IMR-90 (cell line): ENCODE measurements at regions of chr13 and their contacts with region 1.

Region 1: DNA sequence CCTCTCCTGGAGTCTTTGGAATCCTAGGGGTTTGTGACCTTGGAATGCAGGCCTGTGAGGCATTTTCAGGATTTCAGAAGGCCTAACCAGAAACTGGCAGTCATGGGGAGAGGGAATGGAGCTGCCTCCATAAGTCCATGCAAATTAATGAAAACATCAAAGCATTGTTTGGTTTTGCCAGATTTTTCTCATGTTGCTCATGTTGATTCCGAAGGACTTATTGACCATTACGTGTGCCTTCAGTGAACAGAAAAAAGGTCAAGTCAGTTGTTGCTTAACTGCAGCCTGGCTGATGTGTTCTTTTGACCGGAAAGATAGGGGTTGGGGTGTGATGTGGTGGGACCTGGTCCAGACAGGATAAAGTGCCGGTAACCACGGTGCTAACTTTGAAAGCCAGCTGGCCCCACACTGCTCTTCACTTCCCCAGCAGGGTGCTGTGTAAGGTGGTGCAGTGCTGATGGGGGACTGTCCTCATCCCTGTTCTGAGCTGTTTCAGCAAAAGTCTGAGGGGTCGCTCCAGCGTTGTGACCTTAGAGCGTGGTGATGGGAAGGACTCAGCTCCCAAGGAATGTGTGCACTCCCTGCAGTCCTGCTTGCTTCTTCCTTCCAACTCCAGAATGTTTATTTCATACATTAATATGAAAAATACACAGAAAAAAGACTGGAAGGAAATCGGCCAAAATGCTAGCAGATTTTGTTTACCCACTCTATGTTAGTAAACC is 3.5 kb downstream of the RNF113B start:
- DNase-seq: peak; percentile 99
- ATAC-seq: peak; percentile 76
- H3K4me3 ChIP-seq: no peak overlapping the region
- H3K27ac ChIP-seq: peak overlapping the region; percentile 87
- H3K4me1 ChIP-seq: peaks cover 37% of the 10 kb centered on the region
- H3K27me3 ChIP-seq: no peaks in the 10 kb centered on the region
- CTCF ChIP-seq: no peak
- POLR2A ChIP-seq: 0 out of 2 replicates have a peak, but pooled peaks have one; percentile 28
- RAD21 ChIP-seq: 0 out of 2 replicates have a peak, but pooled peaks have one; percentile 10

Region 2: DNA sequence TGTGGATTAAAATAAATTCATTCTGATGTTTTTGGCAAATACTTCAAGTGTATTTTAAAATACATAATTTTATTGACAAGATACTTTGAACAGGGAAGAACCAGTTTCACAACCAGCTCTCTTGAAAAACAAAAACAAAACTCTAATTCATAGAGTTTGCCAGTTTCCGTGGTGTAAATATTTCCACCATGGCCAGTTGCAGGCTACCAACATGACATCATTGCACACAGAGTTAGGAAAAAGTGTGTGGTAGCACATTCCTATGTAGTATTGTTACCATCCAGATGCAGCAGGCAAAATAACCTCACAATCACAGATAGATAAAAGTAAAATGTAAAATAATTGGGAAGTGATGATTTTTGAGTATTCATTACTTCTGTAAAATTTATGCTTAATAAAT is 11.2 kb after region 1 on chr13:
- CTCF ChIA-PET with region 1: no interaction called
- POLR2A ChIA-PET with region 1: no interaction called
- dilution Hi-C with region 1: no loop called
- in situ Hi-C with region 1: no loop called
- intact Hi-C with region 1: loop called (anchors 1 kb)
- DNase-seq: peak; percentile 68
- ATAC-seq: no peak
- H3K4me3 ChIP-seq: no peak overlapping the region
- H3K27ac ChIP-seq: no peak overlapping the region
- H3K4me1 ChIP-seq: peaks cover 19% of the 10 kb centered on the region
- H3K27me3 ChIP-seq: no peaks in the 10 kb centered on the region
- CTCF ChIP-seq: no peak
- POLR2A ChIP-seq: no peak
- RAD21 ChIP-seq: no peak

Region 3: DNA sequence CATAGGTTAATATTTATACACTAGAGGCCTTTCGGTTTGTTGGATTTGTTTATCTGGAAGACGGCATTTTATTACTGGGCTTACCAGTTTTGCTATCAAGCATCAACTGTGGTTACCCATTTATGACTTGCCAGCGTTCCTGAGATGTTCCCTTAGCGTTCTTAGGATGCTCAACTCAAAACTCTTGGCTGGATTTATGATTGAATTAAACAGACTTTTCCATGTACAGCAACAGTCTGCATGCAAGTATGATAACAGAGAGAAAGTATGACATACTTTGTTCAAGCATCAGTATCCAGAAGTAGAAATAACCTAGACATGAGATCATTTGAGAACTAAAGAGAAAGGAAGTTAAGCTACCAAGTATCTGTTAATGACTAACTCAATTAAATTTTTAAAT is 33.4 kb after region 1 on chr13:
- CTCF ChIA-PET with region 1: no interaction called
- POLR2A ChIA-PET with region 1: no interaction called
- dilution Hi-C with region 1: no loop called
- in situ Hi-C with region 1: no loop called
- intact Hi-C with region 1: loop called (anchors 2 kb)
- DNase-seq: peak; percentile 99
- ATAC-seq: peak; percentile 80
- H3K4me3 ChIP-seq: no peak overlapping the region
- H3K27ac ChIP-seq: no peak overlapping the region
- H3K4me1 ChIP-seq: peaks cover 23% of the 10 kb centered on the region
- H3K27me3 ChIP-seq: no peaks in the 10 kb centered on the region
- CTCF ChIP-seq: no peak
- POLR2A ChIP-seq: no peak
- RAD21 ChIP-seq: peak; percentile 25; the same call in 1 of the 2 replicates

Region 4: DNA sequence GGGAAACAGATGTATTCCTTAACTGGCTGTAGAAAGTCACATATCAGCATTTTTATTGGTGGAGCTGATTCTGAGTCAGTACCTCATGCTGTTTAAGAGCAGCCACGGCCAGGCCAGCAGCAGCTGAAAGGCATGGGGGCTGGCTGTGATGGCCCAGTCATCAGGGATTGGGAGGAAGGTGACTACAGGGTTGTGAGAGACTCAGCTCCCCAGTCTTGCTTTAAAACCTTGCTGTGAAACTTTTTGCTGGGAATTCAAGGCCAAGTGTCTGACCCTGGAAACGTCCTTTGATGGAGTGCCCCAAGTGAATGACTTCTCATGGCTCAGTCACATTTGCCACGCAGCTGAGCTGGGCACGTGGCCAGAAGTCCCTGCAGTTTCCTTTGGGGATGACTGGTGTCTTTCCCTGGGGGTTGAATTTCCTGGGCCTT is 42.6 kb after region 1 on chr13:
- CTCF ChIA-PET with region 1: interaction called, 5 read pairs
- POLR2A ChIA-PET with region 1: no interaction called
- dilution Hi-C with region 1: no loop called
- in situ Hi-C with region 1: loop called (anchors 5 kb)
- intact Hi-C with region 1: loop called (anchors 2 kb)
- DNase-seq: peak; percentile 93
- ATAC-seq: peak; percentile 63
- H3K4me3 ChIP-seq: no peak overlapping the region
- H3K27ac ChIP-seq: peak overlapping the region; percentile 65
- H3K4me1 ChIP-seq: peaks cover 42% of the 10 kb centered on the region
- H3K27me3 ChIP-seq: no peaks in the 10 kb centered on the region
- CTCF ChIP-seq: no peak
- POLR2A ChIP-seq: peak; percentile 63
- RAD21 ChIP-seq: peak; percentile 20